Tibial artery (tissue), 4 donors: ENCODE measurements at regions of chr20 and their contacts with region 1.

Region 1: GRCh38 chr20:32336918-32337347 is 21.2 kb upstream of the ASXL1 start:
- DNase-seq: no peak
- H3K4me3 ChIP-seq: no peak overlapping the region
- H3K27ac ChIP-seq: no peak overlapping the region
- H3K4me1 ChIP-seq: no peaks in the 10 kb centered on the region
- H3K27me3 ChIP-seq: no peaks in the 10 kb centered on the region
- CTCF ChIP-seq: peak; percentile 50

Region 2: DNA sequence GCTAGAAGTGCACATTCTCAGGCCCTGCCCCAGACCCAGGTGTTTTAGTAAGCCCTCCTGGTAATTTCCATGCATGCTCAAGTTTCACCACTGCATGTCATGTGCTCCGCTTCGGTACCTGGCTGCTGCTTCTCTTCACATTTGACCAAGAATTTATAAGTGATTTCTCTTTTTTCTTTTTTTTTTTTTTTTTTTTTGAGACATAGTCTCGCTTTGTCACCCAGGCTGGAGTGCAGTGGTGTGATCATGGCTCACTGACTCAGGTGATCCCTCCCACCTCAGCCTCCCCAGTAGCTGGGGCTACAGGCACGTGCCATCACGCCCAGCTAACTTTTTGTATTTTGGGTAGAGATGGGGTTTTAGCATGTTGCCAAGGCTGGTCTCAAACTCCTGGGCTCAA is 211.4 kb before region 1 on chr20:
- intact Hi-C with region 1: no loop called
- DNase-seq: no peak
- H3K4me3 ChIP-seq: no peak overlapping the region
- H3K27ac ChIP-seq: no peak overlapping the region
- H3K4me1 ChIP-seq: peaks cover 0 to 5% (median 0%) of the 10 kb centered on the region in 4 donors
- H3K27me3 ChIP-seq: no peaks in the 10 kb centered on the region
- CTCF ChIP-seq: no peak

Region 3: GRCh38 chr20:32216179-32217142 is 120.5 kb before region 1 on chr20:
- intact Hi-C with region 1: no loop called
- DNase-seq: no peak
- H3K4me3 ChIP-seq: no peak overlapping the region
- H3K27ac ChIP-seq: no peak overlapping the region
- H3K4me1 ChIP-seq: no peaks in the 10 kb centered on the region
- H3K27me3 ChIP-seq: no peaks in the 10 kb centered on the region
- CTCF ChIP-seq: no peak

Region 4: DNA sequence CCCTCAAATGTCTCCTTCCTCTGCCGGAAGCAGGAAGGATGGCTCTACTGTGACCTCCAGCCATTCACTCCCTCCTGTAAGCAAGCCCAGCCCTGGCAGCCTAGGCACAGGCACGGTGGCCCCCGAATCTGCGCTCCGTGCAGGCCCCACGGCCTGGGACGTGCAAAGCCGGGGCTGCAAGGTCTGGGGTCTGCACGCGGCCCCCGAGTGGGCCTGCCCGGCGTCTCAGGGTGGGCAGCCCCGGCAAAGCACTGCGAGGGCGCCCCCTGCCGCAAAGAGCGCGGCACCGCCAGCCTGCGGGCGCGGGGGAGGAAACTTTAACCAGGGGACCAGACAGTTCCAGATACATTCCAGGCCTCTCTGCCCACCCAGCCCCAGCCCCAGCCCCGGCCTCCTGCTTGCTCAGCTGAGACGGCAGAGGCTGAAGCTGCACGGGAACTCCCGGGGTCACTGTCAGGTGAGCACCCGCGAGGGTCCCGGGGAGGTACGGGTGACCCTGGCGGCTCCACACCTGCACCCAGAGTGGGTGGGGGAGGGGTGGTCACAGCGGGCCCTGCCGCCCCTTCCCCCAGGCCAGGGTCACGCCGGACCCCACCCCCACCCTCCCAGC is 120.0 kb after region 1 on chr20:
- intact Hi-C with region 1: loop called (anchors 10 kb)
- DNase-seq: no peak
- H3K4me3 ChIP-seq: peak overlapping the region; percentile 49 to 54
- H3K27ac ChIP-seq: no peak overlapping the region
- H3K4me1 ChIP-seq: peaks cover 7 to 20% (median 14%) of the 10 kb centered on the region in 4 donors
- H3K27me3 ChIP-seq: no peaks in the 10 kb centered on the region
- CTCF ChIP-seq: peak; percentile 62 to 75